Natural killer cell (primary cell): ENCODE measurements at regions of chr1 and their contacts with region 1.

Region 1: GRCh38 chr1:31065310-31066217 is at the start of gene PUM1:
- DNase-seq: peak; percentile 97 to 99
- ATAC-seq: peak; percentile 93 to 99 (median 96)
- H3K4me3 ChIP-seq: peak within 1 kb of the TSS; percentile 55
- H3K4me3 Mint-ChIP-seq: peak within 1 kb of the TSS; percentile 95
- H3K27ac ChIP-seq: peak within 1 kb of the TSS; percentile 80
- H3K27ac Mint-ChIP-seq: peak within 1 kb of the TSS; percentile 96 to 98
- H3K4me1 ChIP-seq: peaks cover 20% of the 10 kb centered on the region
- H3K4me1 Mint-ChIP-seq: peaks cover 45 to 47% of the 10 kb centered on the region in 2 donors
- H3K27me3 ChIP-seq: no peaks in the 10 kb centered on the region
- H3K27me3 Mint-ChIP-seq: no peaks in the 10 kb centered on the region
- CTCF ChIP-seq: no peak
- total RNA-seq, gene PUM1: 193 to 209 (median 202) TPM

Region 2: DNA sequence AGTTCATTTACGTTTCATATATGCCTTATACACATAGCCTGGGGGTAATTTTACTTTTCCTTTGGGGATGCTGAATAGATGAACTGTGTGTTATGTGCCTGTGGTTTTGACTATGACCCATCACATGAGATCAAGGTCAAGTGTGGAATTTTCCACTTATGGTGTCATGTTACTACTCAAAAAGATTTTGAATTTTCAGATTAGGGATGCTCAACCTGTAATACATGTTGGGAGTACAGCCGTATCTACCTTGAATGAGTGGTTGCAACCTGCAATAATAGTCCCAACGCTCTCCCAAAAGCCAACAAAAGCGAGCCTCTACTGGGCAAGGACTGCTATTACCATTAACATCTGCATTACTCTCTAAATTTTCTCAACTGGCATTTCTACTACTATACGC is 88.5 kb before region 1 on chr1:
- intact Hi-C with region 1: loop called (anchors 10 kb)
- DNase-seq: no peak
- ATAC-seq: peak in 2 of 3 donors; percentile 26 to 37
- H3K4me3 ChIP-seq: no peak overlapping the region
- H3K4me3 Mint-ChIP-seq: peak overlapping the region; percentile 2
- H3K27ac ChIP-seq: no peak overlapping the region
- H3K27ac Mint-ChIP-seq: peak overlapping the region; percentile 74 to 90
- H3K4me1 ChIP-seq: peaks cover 5% of the 10 kb centered on the region
- H3K4me1 Mint-ChIP-seq: peaks cover 40 to 43% of the 10 kb centered on the region in 2 donors
- H3K27me3 ChIP-seq: no peaks in the 10 kb centered on the region
- H3K27me3 Mint-ChIP-seq: no peaks in the 10 kb centered on the region
- CTCF ChIP-seq: no peak

Region 3: DNA sequence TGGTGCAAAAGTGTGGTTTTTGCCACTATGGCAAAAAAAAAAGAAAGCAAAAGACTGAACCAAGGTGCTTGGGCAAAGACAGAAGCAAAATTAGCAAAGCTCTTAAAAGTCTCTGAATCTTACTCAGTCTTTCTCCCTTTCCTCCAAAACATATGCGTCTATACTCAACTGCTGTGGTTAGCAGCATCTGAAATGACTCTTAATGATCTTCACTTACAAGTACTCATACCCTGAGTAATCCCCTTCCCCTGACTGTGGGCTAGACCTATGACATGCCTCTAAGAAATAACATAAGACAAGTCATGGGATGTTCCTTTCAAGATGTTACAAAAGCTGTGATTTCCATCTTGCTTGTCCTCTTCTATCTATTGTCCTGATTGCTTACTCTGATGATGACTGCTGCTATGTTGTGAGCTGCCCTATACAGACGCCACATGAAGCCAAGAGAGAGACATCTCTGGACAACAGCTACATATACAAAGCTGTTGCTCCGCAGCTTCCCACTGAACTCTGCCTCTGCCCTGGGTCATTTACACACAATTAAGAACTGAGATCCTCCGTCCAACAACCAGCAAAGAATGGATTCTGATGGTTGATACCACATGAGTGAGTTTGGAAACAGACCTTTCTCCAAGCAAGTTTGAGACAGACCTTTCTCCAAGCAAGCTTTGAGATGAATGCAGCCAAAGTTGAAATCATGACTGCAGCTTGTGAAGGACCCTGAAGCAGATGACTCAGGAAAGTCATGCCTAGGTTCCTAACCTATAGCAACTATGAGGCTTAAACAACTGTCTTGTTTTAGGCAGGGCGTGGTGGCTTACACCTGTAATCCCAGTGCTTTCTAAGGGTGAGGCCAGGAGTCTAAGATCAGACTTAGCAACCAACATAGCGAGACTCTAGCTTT is 55.2 kb before region 1 on chr1:
- intact Hi-C with region 1: loop called (anchors 10 kb)
- DNase-seq: peak in 1 of 2 donors; percentile 24
- ATAC-seq: peak; percentile 52 to 82 (median 63)
- H3K4me3 ChIP-seq: no peak overlapping the region
- H3K4me3 Mint-ChIP-seq: peak overlapping the region; percentile 15
- H3K27ac ChIP-seq: no peak overlapping the region
- H3K27ac Mint-ChIP-seq: peak overlapping the region; percentile 20 to 54
- H3K4me1 ChIP-seq: peaks cover 17% of the 10 kb centered on the region
- H3K4me1 Mint-ChIP-seq: peaks cover 65 to 70% of the 10 kb centered on the region in 2 donors
- H3K27me3 ChIP-seq: no peaks in the 10 kb centered on the region
- H3K27me3 Mint-ChIP-seq: no peaks in the 10 kb centered on the region
- CTCF ChIP-seq: no peak

Region 4: DNA sequence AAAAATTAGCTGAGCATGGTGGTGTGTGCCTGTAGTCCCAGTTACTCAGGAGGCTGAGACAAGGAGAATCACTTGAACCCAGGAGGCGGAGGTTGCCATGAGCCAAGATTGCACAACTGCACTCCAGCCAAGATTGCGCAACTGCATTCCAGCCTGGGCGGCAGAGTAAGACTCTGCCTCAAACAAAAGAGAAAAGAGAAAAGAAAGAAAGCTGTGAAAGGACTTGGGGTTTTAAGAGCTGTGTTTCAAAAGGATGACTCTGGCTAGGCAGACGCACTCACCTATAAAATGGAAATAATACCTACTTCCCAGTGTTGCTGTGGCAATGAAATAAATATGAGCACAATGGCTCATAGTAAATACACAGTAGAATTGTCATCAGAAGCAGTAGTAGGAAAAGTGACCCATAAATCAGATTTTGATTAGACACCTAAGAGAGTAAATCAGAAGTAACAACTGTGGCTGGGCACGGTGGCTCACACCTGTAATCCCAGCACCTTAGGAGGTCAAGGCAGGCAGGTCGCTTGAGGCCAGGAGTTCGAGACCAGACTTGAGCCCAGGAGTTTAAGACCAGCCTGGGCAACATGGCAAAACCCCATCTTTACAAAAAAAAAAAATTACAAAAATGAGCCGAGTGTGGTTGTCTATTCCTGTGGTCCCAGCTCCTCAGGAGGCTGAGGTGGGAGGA is 45.9 kb after region 1 on chr1:
- intact Hi-C with region 1: no loop called
- DNase-seq: no peak
- ATAC-seq: no peak
- H3K4me3 ChIP-seq: no peak overlapping the region
- H3K4me3 Mint-ChIP-seq: no peak overlapping the region
- H3K27ac ChIP-seq: no peak overlapping the region
- H3K27ac Mint-ChIP-seq: no peak overlapping the region
- H3K4me1 ChIP-seq: no peaks in the 10 kb centered on the region
- H3K4me1 Mint-ChIP-seq: no peaks in the 10 kb centered on the region
- H3K27me3 ChIP-seq: peaks cover 2% of the 10 kb centered on the region
- H3K27me3 Mint-ChIP-seq: peaks cover 7 to 8% of the 10 kb centered on the region in 2 donors
- CTCF ChIP-seq: no peak

Region 5: DNA sequence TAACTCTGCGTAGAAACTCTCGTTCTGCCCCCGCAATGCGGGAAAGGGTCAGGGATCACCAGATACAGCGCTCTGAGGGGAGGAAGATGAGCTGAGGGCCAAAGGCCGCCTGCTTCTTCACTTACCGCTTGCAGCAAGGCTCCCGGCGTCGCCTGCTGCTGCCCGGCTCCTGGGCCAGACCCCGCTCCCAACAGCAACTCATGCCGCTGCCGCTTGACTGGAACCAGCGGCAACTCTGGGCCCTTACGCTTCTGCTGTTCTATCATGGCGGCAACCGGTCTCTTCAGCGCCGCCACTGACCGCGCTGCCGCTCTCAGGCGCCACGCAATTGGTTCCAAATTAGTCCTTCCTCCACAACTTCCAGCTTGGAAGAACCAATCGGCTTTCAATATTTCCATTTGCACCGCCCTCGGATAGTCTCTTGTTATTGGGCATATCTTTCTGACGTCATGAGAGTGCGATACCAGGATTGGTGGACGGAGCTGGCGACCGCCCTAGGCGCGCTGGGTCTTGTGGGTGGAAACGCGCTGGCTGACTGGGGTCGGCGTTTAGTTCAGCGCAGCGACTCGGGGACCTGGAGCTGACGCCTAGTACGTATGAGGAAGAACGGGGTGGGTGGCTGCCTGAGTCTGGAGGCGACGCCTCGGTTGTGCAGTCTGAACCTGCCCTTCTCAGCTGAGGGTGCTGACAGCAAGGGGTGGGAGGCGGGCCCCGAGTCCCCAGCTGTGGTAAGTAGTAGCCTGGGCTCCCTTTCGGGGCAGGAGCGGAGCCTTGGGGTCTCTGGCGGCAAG is 231.1 kb after region 1 on chr1 and contains the starts of genes SNRNP40 and ZCCHC17:
- intact Hi-C with region 1: loop called (anchors 5 kb)
- DNase-seq: peak; percentile 90 to 98
- ATAC-seq: peak; percentile 86 to 95 (median 89)
- H3K4me3 ChIP-seq: peak within 1 kb of the TSS; percentile 93
- H3K4me3 Mint-ChIP-seq: no peak within 1 kb of the TSS
- H3K27ac ChIP-seq: peak within 1 kb of the TSS; percentile 95
- H3K27ac Mint-ChIP-seq: no peak within 1 kb of the TSS
- H3K4me1 ChIP-seq: peaks cover 36% of the 10 kb centered on the region
- H3K4me1 Mint-ChIP-seq: peaks cover 13 to 34% of the 10 kb centered on the region in 2 donors
- H3K27me3 ChIP-seq: no peaks in the 10 kb centered on the region
- H3K27me3 Mint-ChIP-seq: no peaks in the 10 kb centered on the region
- CTCF ChIP-seq: no peak
- total RNA-seq, gene SNRNP40: 57.9 to 71.2 (median 60.3) TPM
- total RNA-seq, gene ZCCHC17: 24.1 to 31.1 (median 27.8) TPM